Dendritic cell treated with granulocyte-macrophage colony-stimulating factor and Interleukin-4, amounts not matched to agents 40 ng/mL and 50 ng/mL, for 4 days (primary cell): ENCODE measurements at regions of chr9 and their contacts with region 1.

Region 1: DNA sequence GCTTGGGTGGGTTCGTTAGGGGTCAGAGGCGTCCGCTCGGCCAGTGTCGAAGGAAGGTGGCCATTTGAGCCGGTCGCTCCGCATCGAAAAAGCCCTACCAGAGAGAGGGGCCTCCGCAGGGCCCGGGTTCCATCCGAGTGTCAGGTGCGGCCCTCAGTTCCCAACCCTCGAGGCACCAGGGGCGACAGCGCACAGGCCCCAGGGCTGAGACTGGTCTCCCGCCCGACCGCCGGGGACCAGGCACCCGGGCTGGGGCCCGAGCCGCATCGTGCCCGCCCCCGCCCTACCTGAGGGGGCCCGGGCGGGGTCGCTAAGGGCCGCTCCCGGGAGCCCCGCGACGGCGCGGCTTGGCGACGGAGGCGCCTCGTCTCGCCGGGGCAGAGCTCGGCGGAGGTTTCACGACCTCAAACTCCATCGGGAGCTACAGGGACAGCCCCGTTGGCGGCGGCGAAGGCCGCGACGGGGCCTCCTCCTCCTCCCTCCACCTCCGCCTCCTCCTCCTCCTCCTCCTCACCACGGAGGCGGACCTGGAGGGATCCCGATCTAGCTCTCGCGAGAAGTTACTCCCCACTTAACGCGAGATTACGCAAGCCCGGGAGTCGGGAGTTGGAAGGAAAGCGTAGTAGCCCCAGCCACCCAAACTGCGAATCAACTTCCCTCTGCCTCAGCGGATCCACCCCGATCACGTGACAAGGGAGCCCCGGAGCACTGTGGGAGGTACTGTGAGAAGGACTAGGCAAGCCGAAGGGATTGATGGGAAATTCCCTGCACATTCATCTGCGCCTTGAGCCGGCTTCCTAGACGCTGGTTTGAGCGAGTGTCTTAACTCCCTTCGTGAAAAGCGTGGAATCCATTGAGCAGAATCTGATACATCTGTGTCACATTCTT is at the start of gene RC3H2:
- H3K4me3 Mint-ChIP-seq: peak within 1 kb of the TSS; percentile 86
- H3K27ac Mint-ChIP-seq: peak within 1 kb of the TSS; percentile 87
- H3K4me1 Mint-ChIP-seq: peaks cover 7% of the 10 kb centered on the region
- H3K27me3 Mint-ChIP-seq: no peaks in the 10 kb centered on the region

Region 2: GRCh38 chr9:122092611-122093506 is 812.2 kb before region 1 on chr9 and contains the start of gene TTLL11:
- intact Hi-C with region 1: loop called (anchors 5 kb)
- H3K4me3 Mint-ChIP-seq: peak within 1 kb of the TSS; percentile 82
- H3K27ac Mint-ChIP-seq: peak within 1 kb of the TSS; percentile 65
- H3K4me1 Mint-ChIP-seq: peaks cover 52% of the 10 kb centered on the region
- H3K27me3 Mint-ChIP-seq: peaks cover 20% of the 10 kb centered on the region

Region 3: GRCh38 chr9:122846371-122846940 is 58.6 kb before region 1 on chr9:
- intact Hi-C with region 1: no loop called
- H3K4me3 Mint-ChIP-seq: no peak overlapping the region
- H3K27ac Mint-ChIP-seq: no peak overlapping the region
- H3K4me1 Mint-ChIP-seq: no peaks in the 10 kb centered on the region
- H3K27me3 Mint-ChIP-seq: no peaks in the 10 kb centered on the region

Region 4: GRCh38 chr9:122931226-122932121 is 26.4 kb after region 1 on chr9 and contains the start of gene ZBTB26:
- intact Hi-C with region 1: loop called (anchors 2 kb)
- H3K4me3 Mint-ChIP-seq: no peak within 1 kb of the TSS
- H3K27ac Mint-ChIP-seq: no peak within 1 kb of the TSS
- H3K4me1 Mint-ChIP-seq: peaks cover 14% of the 10 kb centered on the region
- H3K27me3 Mint-ChIP-seq: no peaks in the 10 kb centered on the region

Region 5: DNA sequence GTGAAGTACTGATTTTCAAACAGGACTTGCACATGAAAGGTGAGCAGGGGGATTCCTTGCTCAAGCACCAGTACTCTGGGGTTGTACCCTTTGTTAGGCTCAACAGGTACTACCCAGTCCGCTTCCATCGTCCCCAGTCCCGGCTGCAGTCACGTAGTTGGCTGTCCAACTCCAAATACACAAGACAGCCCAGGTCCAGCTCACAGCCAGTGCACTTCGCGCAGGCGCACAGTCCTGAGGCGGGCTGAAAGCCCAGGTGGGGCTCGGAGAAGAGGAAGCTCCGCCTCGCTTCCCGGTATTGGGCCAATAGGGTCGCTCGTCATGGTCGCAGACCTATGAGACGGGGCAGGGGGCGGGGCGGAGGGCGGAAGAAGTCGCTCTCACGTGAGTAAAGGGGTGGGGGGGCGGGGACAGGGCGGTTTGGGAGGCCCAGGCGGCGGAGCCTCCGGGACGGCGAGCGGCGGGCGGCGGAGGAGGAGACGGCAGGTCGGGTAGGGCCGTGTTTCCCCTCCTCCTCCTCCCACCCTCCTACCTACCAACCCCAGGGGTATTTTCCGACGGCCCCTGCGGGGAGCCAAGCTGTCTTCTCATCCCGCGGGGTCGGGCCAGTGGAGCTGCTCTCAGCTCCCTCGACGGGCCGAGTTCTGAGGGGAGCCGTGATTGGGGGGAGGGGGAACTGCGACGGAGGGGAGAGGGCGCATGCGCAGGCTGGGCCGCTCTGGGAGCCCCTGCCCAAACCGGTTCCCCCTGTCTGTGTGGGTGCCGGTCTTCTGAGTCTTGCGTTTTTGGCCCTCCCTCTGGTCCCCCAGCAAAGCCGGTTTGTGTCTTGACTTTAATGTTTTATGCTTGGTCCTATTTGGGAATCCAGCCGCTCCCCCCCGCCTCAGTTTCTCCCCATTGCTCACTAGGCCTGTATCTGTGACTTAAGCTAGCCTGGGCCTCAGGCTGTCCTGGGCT is 35.8 kb after region 1 on chr9 and contains the start of gene RABGAP1:
- intact Hi-C with region 1: loop called (anchors 2 kb)
- H3K4me3 Mint-ChIP-seq: peak within 1 kb of the TSS; percentile 97
- H3K27ac Mint-ChIP-seq: peak within 1 kb of the TSS; percentile 95
- H3K4me1 Mint-ChIP-seq: peaks cover 65% of the 10 kb centered on the region
- H3K27me3 Mint-ChIP-seq: no peaks in the 10 kb centered on the region

Region 6: DNA sequence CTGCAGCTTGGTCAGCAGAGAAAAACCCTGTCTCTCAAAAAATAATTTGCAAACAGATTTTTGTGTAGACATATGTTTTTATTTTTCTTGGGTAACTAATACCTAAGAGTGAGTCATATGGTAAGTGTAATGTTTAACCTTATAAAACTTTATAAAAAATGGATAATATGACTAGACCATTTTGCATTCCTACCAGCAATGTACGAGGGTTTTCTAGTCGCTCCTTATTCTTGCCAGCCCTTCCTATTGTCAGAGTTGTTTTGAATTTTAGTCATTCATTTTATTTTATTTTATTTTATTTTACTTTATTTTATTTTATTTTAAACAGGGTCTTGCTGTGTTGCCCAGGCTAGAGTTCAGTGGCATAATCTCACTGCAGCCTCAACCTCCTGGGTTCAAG is 73.5 kb after region 1 on chr9:
- intact Hi-C with region 1: no loop called
- H3K4me3 Mint-ChIP-seq: no peak overlapping the region
- H3K27ac Mint-ChIP-seq: no peak overlapping the region
- H3K4me1 Mint-ChIP-seq: peaks cover 9% of the 10 kb centered on the region
- H3K27me3 Mint-ChIP-seq: no peaks in the 10 kb centered on the region

Region 7: GRCh38 chr9:122991370-122991830 is 86.3 kb after region 1 on chr9:
- intact Hi-C with region 1: loop called (anchors 5 kb)
- H3K4me3 Mint-ChIP-seq: no peak overlapping the region
- H3K27ac Mint-ChIP-seq: no peak overlapping the region
- H3K4me1 Mint-ChIP-seq: no peaks in the 10 kb centered on the region
- H3K27me3 Mint-ChIP-seq: no peaks in the 10 kb centered on the region

Region 8: DNA sequence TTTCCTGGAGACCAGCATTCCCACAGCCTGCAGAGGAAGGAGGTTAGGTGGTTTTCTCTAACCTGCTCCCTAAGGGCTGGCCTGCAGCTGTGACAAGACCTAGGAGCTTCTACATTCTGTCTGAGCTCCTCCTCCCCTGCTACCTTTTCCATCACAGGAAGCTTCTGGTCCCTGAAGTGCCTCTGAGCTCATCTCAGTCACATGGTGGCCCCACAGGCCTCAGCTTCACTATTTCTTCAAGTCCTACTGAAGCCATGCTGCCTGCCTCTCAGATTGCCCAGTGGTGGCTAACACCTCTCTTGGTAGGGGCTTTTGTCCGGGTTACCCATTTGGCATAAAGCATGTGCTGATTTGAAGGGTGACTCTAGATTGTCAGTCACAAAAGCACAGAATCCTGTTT is 710.3 kb after region 1 on chr9:
- intact Hi-C with region 1: no loop called
- H3K4me3 Mint-ChIP-seq: no peak overlapping the region
- H3K27ac Mint-ChIP-seq: no peak overlapping the region
- H3K4me1 Mint-ChIP-seq: no peaks in the 10 kb centered on the region
- H3K27me3 Mint-ChIP-seq: no peaks in the 10 kb centered on the region